Activated CD4-positive, alpha-beta T cell treated with anti-CD3 and anti-CD28 coated beads for 36 hours (primary cell): ENCODE measurements at regions of chr19 and their contacts with region 1.

Region 1: DNA sequence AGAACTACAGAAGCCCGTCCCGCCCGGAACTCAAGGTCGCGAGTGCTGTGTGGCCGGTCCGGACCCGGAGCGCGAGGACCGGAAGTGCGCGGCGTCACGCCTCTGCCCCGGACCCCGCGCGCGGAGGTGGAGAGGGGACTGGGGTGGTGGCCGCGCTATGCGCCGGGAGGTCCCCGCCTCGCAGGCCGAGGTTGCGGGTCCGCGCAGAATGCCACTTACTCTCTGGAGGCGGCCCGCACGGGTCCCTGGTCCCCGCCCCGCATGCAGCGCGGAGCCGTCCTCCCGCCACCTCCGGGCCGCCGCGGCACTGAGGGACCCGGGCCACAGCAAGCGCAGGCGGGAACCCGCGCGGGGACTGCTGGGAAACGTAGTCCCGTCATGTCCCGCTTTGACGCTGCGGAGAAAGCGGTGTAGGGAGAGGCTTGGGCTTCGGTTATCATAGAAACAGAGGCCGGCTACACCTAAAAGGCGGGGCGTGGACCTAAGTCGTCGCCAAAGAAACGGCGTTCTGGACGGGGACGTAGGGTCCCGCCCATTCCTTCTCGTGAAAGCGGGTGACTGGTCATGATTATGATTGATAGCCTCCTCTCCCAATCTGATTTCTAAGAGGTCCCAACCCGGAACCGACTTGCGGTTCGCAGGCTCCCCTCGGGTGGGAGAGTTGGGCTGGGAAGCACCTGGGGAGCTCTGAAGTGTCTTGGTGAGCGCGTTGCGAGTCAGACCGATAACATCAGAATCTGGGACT is at the start of gene ZNF837:
- DNase-seq: peak; percentile 99
- ATAC-seq: peak; percentile 89
- H3K4me3 Mint-ChIP-seq: peak within 1 kb of the TSS; percentile 91
- H3K27ac Mint-ChIP-seq: peak within 1 kb of the TSS; percentile 94
- H3K4me1 Mint-ChIP-seq: peaks cover 19% of the 10 kb centered on the region
- H3K27me3 Mint-ChIP-seq: no peaks in the 10 kb centered on the region
- total RNA-seq, gene ZNF837: 2.0 to 2.5 TPM

Region 2: GRCh38 chr19:57947208-57948134 is 433.4 kb before region 1 on chr19 and contains the start of gene ZNF256:
- CTCF ChIA-PET with region 1: no interaction called
- POLR2A ChIA-PET with region 1: no interaction called
- intact Hi-C with region 1: no loop called
- DNase-seq: peak; percentile 95
- ATAC-seq: peak; percentile 99
- H3K4me3 Mint-ChIP-seq: peak within 1 kb of the TSS; percentile 87
- H3K27ac Mint-ChIP-seq: peak within 1 kb of the TSS; percentile 90
- H3K4me1 Mint-ChIP-seq: peaks cover 16% of the 10 kb centered on the region
- H3K27me3 Mint-ChIP-seq: no peaks in the 10 kb centered on the region
- total RNA-seq, gene ZNF256: 6.3 to 6.9 TPM

Region 3: DNA sequence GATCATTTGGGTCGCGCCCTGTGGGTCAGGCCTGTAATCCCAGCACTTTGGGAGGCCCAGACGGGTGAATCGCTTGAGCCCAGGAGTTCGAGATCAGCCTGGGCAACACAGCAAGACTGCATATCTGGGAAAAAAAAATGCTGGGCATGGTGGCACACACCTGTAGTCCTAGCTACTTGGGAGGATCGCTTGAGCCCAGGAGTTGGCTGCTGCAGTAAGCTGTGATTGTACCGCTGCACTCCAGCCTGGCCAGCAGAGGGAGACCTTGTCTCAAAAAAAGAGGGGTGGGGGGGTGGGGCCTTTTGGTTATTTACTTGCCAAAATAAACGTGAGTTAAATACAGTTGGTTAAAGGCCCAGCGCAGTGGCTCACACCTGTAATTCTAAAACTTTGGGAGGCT is 162.0 kb before region 1 on chr19:
- CTCF ChIA-PET with region 1: no interaction called
- POLR2A ChIA-PET with region 1: no interaction called
- intact Hi-C with region 1: loop called in 1 of 2 experiments (anchors 2 kb)
- DNase-seq: peak; percentile 70
- ATAC-seq: peak; percentile 88
- H3K4me3 Mint-ChIP-seq: no peak overlapping the region
- H3K27ac Mint-ChIP-seq: no peak overlapping the region
- H3K4me1 Mint-ChIP-seq: no peaks in the 10 kb centered on the region
- H3K27me3 Mint-ChIP-seq: no peaks in the 10 kb centered on the region

Region 4: GRCh38 chr19:58326914-58327726 is 53.8 kb before region 1 on chr19 and contains the start of gene ZSCAN22:
- CTCF ChIA-PET with region 1: no interaction called
- POLR2A ChIA-PET with region 1: no interaction called
- intact Hi-C with region 1: loop called (anchors 1 kb)
- DNase-seq: peak; percentile 96
- ATAC-seq: peak; percentile 91
- H3K4me3 Mint-ChIP-seq: no peak within 1 kb of the TSS
- H3K27ac Mint-ChIP-seq: no peak within 1 kb of the TSS
- H3K4me1 Mint-ChIP-seq: peaks cover 4% of the 10 kb centered on the region
- H3K27me3 Mint-ChIP-seq: no peaks in the 10 kb centered on the region
- total RNA-seq, gene ZSCAN22: 3.1 to 3.8 TPM

Region 5: DNA sequence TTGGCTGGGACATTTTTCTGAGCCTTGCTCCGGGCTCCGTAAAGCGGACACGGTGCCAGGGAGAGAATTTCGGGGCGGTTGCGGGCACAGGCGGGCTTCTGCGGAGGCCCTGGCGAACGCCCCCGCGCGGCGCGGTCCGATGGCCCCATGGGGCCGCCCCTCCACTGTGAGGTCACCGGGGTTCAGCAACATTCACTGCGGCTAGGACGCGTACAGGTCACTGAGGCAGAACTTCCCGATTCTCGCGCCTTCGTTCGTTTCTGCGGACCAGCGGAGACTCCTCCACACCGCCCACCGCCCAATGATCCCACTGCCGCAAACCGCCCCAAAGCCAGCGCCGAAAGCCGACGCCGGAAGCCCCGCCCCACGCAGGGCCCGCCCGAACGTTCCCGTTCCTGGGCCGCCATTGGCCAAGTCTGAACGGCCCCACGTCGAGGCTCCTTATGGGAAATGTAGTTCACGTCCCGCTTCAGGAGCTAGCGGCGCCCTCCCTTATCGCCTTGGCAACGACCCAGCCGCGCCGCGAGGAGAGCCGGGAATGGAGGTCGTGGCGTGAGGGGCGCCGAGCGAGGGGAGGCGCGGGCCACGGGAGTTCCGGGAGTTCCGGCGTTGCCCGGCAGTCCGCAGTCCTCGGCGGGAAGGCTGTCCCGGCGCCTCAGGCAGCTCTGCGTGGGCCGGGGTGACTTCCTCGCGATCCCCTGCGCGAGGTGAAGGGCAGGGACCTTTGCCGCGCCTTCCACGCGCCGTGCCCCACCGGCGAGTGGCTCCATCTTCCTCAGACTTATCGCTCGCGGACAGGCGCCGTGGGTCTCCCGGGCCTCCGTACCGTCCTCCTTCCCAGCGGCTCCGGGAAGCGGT is 27.5 kb after region 1 on chr19 and contains the start of gene ZNF584:
- CTCF ChIA-PET with region 1: no interaction called
- POLR2A ChIA-PET with region 1: interaction called, 5 read pairs
- intact Hi-C with region 1: loop called (anchors 1 to 2 kb)
- DNase-seq: peak; percentile 97
- ATAC-seq: peak; percentile 97
- H3K4me3 Mint-ChIP-seq: peak within 1 kb of the TSS; percentile 84
- H3K27ac Mint-ChIP-seq: peak within 1 kb of the TSS; percentile 92
- H3K4me1 Mint-ChIP-seq: peaks cover 29% of the 10 kb centered on the region
- H3K27me3 Mint-ChIP-seq: no peaks in the 10 kb centered on the region
- total RNA-seq, gene ZNF584: 9.9 to 11.2 TPM

Region 6: GRCh38 chr19:58475714-58476497 is 95.0 kb after region 1 on chr19 and contains the start of gene ZNF446:
- CTCF ChIA-PET with region 1: no interaction called
- POLR2A ChIA-PET with region 1: no interaction called
- intact Hi-C with region 1: loop called (anchors 1 to 5 kb)
- DNase-seq: peak; percentile 98
- ATAC-seq: peak; percentile 92
- H3K4me3 Mint-ChIP-seq: peak within 1 kb of the TSS; percentile 83
- H3K27ac Mint-ChIP-seq: peak within 1 kb of the TSS; percentile 96
- H3K4me1 Mint-ChIP-seq: peaks cover 14% of the 10 kb centered on the region
- H3K27me3 Mint-ChIP-seq: no peaks in the 10 kb centered on the region
- total RNA-seq, gene ZNF446: 4.2 to 4.7 TPM

Region 7: GRCh38 chr19:58543826-58544590 is 163.1 kb after region 1 on chr19 and contains the start of gene TRIM28:
- CTCF ChIA-PET with region 1: no interaction called
- POLR2A ChIA-PET with region 1: interaction called, 3 read pairs
- intact Hi-C with region 1: loop called in 1 of 2 experiments (anchors 1 kb)
- DNase-seq: peak; percentile 100
- ATAC-seq: peak; percentile 98
- H3K4me3 Mint-ChIP-seq: peak within 1 kb of the TSS; percentile 96
- H3K27ac Mint-ChIP-seq: peak within 1 kb of the TSS; percentile 97
- H3K4me1 Mint-ChIP-seq: peaks cover 34% of the 10 kb centered on the region
- H3K27me3 Mint-ChIP-seq: peaks cover 4% of the 10 kb centered on the region
- total RNA-seq, gene TRIM28: 481 to 758 TPM